AG04450 (cell line): ENCODE measurements at regions of chr1 and their contacts with region 1.

Region 1: DNA sequence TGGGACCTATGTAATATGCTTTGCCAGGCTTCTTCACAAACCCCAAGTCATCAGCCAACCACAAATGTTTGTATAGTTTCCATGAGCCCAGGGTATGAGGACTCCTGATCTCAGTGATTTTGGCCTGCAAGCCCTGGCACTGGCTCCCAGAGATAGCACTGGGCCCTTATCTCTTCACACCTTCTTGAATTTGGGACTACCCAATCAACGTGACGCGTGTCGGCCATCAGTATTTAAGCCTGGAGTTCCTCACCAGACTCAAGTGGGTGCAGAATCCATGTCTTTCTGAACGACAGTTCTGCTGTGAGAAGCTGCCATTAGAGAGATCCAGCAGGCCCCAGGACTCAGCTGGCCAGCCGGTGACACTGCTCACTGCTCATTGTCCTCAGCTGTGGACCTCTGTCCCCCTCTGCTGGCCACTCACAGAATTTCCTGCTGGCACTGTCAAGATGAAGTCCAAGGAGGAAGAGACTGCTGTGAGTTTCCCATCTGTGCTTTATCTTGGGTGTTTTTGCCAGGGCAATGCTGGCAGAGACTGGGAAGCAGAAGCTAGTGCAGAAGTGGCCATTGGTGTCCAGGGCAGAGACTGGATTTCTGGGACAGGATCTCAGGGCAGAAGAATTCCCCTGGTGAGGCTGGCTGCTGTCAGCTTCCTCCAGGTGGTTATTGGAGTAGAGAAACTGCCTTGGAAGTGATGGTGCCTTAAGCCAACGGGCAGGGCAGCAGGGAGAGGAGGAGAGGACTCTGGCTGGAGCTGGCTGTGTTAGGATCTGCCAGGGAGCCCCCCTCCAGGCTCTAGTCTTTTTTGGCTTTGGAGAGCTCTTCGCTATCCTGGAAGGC is 28.4 kb downstream of the TMCC2 start:
- DNase-seq: peak; percentile 59
- H3K4me3 ChIP-seq: no peak overlapping the region
- H3K27ac ChIP-seq: no peak overlapping the region
- H3K27me3 ChIP-seq: no peaks in the 10 kb centered on the region
- CTCF ChIP-seq: peak; percentile 97

Region 2: DNA sequence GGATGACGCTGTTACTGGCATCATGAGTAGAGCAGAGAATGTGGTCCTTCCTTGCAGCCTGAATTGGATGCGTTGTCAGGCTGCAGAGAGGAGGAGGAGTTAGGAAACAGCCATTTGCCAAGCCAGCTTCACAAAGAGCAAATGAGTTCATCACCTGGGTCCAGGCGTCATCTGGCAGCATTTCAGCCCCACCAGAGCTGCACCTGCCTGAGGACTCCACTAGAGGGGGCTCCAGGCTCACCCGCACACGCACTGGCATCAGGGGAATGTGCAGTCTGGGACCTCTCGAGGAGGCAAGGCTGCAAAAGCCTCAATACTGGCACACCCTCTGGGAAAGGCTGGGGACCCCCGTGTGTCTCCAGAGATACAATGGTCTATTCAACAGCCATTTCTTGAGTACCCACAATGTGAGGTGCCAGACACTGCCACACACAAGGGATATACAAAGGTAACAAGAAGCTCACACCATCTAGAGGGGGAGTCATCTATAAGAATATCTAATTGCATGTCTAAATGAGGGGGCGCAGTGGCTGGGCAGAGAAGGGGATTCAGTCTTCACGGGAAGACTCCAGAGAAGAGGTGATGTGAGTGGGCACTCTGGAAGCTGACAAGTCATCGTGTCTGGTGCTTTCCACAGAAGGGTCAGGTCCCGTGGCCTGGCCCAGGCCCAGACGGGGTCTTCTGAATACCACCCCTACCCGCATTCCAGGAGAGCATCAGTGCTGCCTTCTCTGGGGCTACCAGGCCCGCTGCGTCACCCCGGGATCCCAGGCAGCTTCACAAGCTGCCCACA is 266.7 kb before region 1 on chr1:
- CTCF ChIA-PET with region 1: interaction called, 46 read pairs
- POLR2A ChIA-PET with region 1: no interaction called
- DNase-seq: peak; percentile 36
- H3K4me3 ChIP-seq: no peak overlapping the region
- H3K27ac ChIP-seq: no peak overlapping the region
- H3K27me3 ChIP-seq: peaks cover 36% of the 10 kb centered on the region
- CTCF ChIP-seq: peak; percentile 98

Region 3: DNA sequence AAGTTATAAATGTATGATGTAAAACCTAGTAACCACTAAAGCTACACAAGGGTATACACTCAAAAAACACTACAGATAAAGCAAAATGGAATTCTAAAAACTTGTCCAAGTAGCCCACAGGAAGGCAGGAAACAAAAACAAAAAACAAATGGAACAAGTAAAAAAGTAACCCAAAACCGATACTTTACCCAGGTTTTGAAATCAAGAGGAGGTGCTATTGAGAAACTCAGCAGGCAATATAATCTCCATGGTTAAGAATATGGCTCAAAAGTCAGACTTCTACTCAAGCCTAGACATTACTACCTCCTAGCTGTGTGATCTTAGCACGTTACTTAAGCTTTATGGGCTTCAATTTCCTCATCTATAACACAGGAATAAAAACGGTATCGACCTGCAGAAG is 147.7 kb before region 1 on chr1:
- CTCF ChIA-PET with region 1: interaction called, 10 read pairs
- POLR2A ChIA-PET with region 1: interaction called, 11 read pairs
- DNase-seq: no peak
- H3K4me3 ChIP-seq: no peak overlapping the region
- H3K27ac ChIP-seq: no peak overlapping the region
- H3K27me3 ChIP-seq: no peaks in the 10 kb centered on the region
- CTCF ChIP-seq: no peak

Region 4: GRCh38 chr1:205147191-205147835 is 108.8 kb before region 1 on chr1:
- CTCF ChIA-PET with region 1: interaction called, 62 read pairs
- POLR2A ChIA-PET with region 1: no interaction called
- DNase-seq: peak; percentile 36
- H3K4me3 ChIP-seq: no peak overlapping the region
- H3K27ac ChIP-seq: peak overlapping the region; percentile 58
- H3K27me3 ChIP-seq: no peaks in the 10 kb centered on the region
- CTCF ChIP-seq: no peak

Region 5: GRCh38 chr1:205273551-205273982 is 17.4 kb after region 1 on chr1:
- CTCF ChIA-PET with region 1: interaction called, 24 read pairs
- POLR2A ChIA-PET with region 1: interaction called, 5 read pairs
- DNase-seq: no peak
- H3K4me3 ChIP-seq: no peak overlapping the region
- H3K27ac ChIP-seq: no peak overlapping the region
- H3K27me3 ChIP-seq: no peaks in the 10 kb centered on the region
- CTCF ChIP-seq: peak; percentile 97